Psoas muscle (tissue), 8 donors: ENCODE measurements at regions of chr4 and their contacts with region 1.

Region 1: GRCh38 chr4:121900132-121900983 is 30.1 kb upstream of the BBS7 start:
- DNase-seq: no peak
- ATAC-seq: peak in 3 of 4 donors; percentile 40 to 76 (median 42)
- H3K4me3 ChIP-seq: no peak overlapping the region
- H3K27ac ChIP-seq: no peak overlapping the region
- H3K4me1 ChIP-seq: no peaks in the 10 kb centered on the region
- H3K27me3 ChIP-seq: no peaks in the 10 kb centered on the region
- CTCF ChIP-seq: peak; percentile 72

Region 2: GRCh38 chr4:122224348-122224747 is 324.0 kb after region 1 on chr4:
- intact Hi-C with region 1: loop called in 1 of 2 experiments (anchors 5 kb)
- DNase-seq: no peak
- ATAC-seq: no peak
- H3K4me3 ChIP-seq: no peak overlapping the region
- H3K27ac ChIP-seq: no peak overlapping the region
- H3K4me1 ChIP-seq: no peaks in the 10 kb centered on the region
- H3K27me3 ChIP-seq: no peaks in the 10 kb centered on the region
- CTCF ChIP-seq: peak; percentile 22

Region 3: GRCh38 chr4:122577808-122578781 is 677.7 kb after region 1 on chr4:
- intact Hi-C with region 1: loop called (anchors 5 kb)
- DNase-seq: no peak
- ATAC-seq: peak in 2 of 4 donors; percentile 53 to 71
- H3K4me3 ChIP-seq: no peak overlapping the region
- H3K27ac ChIP-seq: no peak overlapping the region
- H3K4me1 ChIP-seq: no peaks in the 10 kb centered on the region
- H3K27me3 ChIP-seq: no peaks in the 10 kb centered on the region
- CTCF ChIP-seq: peak; percentile 58